ENCODE measurements at regions of chr11 and their contacts with region 1.

Region 1: DNA sequence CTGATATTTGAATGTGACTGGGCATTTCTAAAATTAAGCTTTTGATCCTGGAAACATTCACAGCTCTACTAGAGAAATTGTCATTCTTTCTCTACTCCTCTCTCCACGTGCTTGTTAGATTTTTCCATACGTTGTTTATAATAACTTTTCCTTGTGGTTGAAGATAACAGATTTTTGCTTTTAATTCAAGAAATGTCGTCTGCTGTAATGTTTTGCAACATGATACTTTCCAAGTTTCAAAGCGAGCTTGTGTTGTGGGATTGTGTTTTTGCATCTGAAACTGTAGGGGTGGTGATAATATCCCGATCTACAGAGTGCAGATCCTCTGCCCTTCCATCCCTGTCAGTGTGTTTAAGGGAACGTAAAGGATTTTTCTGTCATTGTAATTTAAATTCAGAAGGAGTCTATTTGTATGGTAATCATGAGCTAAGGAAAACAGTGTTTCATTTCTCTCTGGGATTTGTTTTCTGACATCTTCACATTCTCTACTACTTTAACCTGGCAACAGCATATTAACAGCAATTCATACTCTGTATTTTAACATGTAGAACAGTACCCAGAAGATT is 321.4 kb downstream of the FAT3 start:
- DNase-seq: no peak
- ATAC-seq: no peak

Region 2: DNA sequence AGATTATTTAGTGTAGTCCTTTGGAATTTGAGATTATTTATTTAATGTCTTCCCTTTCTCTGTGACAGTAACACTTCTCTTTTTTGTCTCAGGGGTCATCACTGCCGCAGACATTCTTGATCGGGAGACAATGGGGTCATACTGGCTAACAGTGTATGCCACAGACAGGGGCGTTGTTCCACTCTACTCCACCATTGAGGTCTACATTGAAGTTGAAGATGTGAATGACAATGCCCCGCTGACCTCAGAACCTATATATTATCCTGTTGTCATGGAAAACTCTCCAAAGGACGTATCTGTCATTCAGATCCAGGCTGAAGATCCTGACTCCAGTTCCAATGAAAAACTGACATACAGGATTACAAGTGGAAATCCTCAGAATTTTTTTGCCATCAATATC is 21.4 kb before region 1 on chr11:
- intact Hi-C with region 1: loop called (anchors 1 kb)
- DNase-seq: no peak
- ATAC-seq: no peak

Region 3: GRCh38 chr11:92576315-92576714 is 30.3 kb after region 1 on chr11:
- intact Hi-C with region 1: loop called (anchors 1 kb)
- DNase-seq: no peak
- ATAC-seq: no peak

Measured in sciatic nerve (tissue), 2 donors.